ENCODE measurements at regions of chr3 and their contacts with region 1.

Region 1: GRCh38 chr3:19946832-19947548 is at the start of gene RAB5A:
- DNase-seq: peak; percentile 97
- H3K4me3 ChIP-seq: peak within 1 kb of the TSS; percentile 97 to 99
- H3K27ac ChIP-seq: peak within 1 kb of the TSS; percentile 92 to 97
- H3K4me1 ChIP-seq: peaks cover 0 to 2% of the 10 kb centered on the region in 2 donors
- H3K27me3 ChIP-seq: no peaks in the 10 kb centered on the region
- CTCF ChIP-seq: no peak
- POLR2A ChIP-seq: peak; percentile 72 to 87
- total RNA-seq, gene RAB5A: 34.1 to 76.4 (median 60.0) TPM

Region 2: DNA sequence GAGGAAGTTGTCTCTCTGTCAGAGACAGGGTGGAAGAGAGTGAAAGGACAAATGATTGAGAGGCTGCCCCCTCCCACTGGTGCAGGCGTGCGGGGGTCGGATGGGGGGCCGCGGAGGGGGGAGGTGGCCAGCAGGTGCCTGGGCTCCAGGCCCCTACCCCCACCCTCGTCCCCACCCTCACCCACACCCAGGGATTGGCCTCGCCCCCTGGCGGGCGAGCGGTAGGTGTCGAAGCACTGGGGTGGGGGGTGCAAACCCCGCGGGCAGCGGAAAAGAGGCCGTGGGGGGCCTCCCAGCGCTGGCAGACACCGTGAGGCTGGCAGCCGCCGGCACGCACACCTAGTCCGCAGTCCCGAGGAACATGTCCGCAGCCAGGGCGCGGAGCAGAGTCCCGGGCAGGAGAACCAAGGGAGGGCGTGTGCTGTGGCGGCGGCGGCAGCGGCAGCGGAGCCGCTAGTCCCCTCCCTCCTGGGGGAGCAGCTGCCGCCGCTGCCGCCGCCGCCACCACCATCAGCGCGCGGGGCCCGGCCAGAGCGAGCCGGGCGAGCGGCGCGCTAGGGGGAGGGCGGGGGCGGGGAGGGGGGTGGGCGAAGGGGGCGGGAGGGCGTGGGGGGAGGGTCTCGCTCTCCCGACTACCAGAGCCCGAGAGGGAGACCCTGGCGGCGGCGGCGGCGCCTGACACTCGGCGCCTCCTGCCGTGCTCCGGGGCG is 92.9 kb after region 1 on chr3 and contains the start of gene KAT2B:
- intact Hi-C with region 1: loop called (anchors 10 kb)
- DNase-seq: peak; percentile 75 to 78
- H3K4me3 ChIP-seq: peak within 1 kb of the TSS; percentile 81 to 94
- H3K27ac ChIP-seq: peak within 1 kb of the TSS; percentile 96 to 99
- H3K4me1 ChIP-seq: peaks cover 0 to 16% of the 10 kb centered on the region in 2 donors
- H3K27me3 ChIP-seq: no peaks in the 10 kb centered on the region
- CTCF ChIP-seq: peak; percentile 51 to 73 (median 68)
- POLR2A ChIP-seq: peak; percentile 45 to 54
- total RNA-seq, gene KAT2B: 12.8 to 52.1 (median 35.2) TPM

Region 3: DNA sequence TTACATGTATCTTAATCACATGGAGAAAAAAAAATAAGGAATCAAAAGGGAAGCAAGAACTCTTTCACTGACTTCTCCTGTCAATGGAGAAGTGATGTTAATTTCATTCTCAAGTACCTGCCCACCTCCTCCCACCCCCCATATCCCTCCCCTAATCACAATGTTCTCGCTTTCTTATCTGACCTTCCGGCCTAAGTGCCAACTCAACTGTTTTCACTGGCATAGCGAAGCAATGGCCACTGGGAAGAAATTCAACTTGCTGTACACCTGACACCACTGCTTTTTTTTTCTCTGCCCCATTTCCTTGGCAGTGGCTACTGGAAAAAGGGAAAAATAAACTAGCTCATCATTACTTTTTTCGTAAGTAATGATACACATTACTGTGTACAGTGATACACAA is 235.2 kb after region 1 on chr3:
- intact Hi-C with region 1: loop called (anchors 5 kb)
- DNase-seq: no peak
- H3K4me3 ChIP-seq: no peak overlapping the region
- H3K27ac ChIP-seq: no peak overlapping the region
- H3K4me1 ChIP-seq: no peaks in the 10 kb centered on the region
- H3K27me3 ChIP-seq: no peaks in the 10 kb centered on the region
- CTCF ChIP-seq: no peak
- POLR2A ChIP-seq: no peak

Measured in uterus (tissue), 4 donors.